ENCODE measurements at regions of chr17 and their contacts with region 1.

Region 1: GRCh38 chr17:30336369-30337171 is 2.7 kb upstream of the TMIGD1 start:
- DNase-seq: peak; percentile 88
- H3K4me3 Mint-ChIP-seq: no peak overlapping the region
- H3K27ac Mint-ChIP-seq: no peak overlapping the region
- H3K4me1 Mint-ChIP-seq: peaks cover 33% of the 10 kb centered on the region
- H3K27me3 Mint-ChIP-seq: peaks cover 8% of the 10 kb centered on the region

Region 2: GRCh38 chr17:30116661-30117551 is 219.7 kb before region 1 on chr17 and contains the start of gene NSRP1:
- intact Hi-C with region 1: loop called (anchors 2 kb)
- DNase-seq: peak; percentile 98
- H3K4me3 Mint-ChIP-seq: peak within 1 kb of the TSS; percentile 96
- H3K27ac Mint-ChIP-seq: peak within 1 kb of the TSS; percentile 96
- H3K4me1 Mint-ChIP-seq: peaks cover 45% of the 10 kb centered on the region
- H3K27me3 Mint-ChIP-seq: no peaks in the 10 kb centered on the region
- total RNA-seq, gene NSRP1: 29.8 and 31.7 TPM in 2 replicates

Region 3: GRCh38 chr17:30291543-30292285 is 44.9 kb before region 1 on chr17 and contains the start of gene BLMH:
- intact Hi-C with region 1: loop called (anchors 1 kb)
- DNase-seq: peak; percentile 96
- H3K4me3 Mint-ChIP-seq: peak within 1 kb of the TSS; percentile 91
- H3K27ac Mint-ChIP-seq: peak within 1 kb of the TSS; percentile 91
- H3K4me1 Mint-ChIP-seq: peaks cover 15% of the 10 kb centered on the region
- H3K27me3 Mint-ChIP-seq: no peaks in the 10 kb centered on the region
- total RNA-seq, gene BLMH: 68.2 and 72.8 TPM in 2 replicates

Region 4: GRCh38 chr17:30378824-30379302 is 42.3 kb after region 1 on chr17 and contains the start of gene CPD:
- intact Hi-C with region 1: loop called (anchors 1 kb)
- DNase-seq: peak; percentile 100
- H3K4me3 Mint-ChIP-seq: peak within 1 kb of the TSS; percentile 84
- H3K27ac Mint-ChIP-seq: peak within 1 kb of the TSS; percentile 90
- H3K4me1 Mint-ChIP-seq: peaks cover 51% of the 10 kb centered on the region
- H3K27me3 Mint-ChIP-seq: no peaks in the 10 kb centered on the region
- total RNA-seq, gene CPD: 26.6 and 33.4 TPM in 2 replicates

Region 5: GRCh38 chr17:30413109-30413508 is 76.5 kb after region 1 on chr17:
- intact Hi-C with region 1: no loop called
- DNase-seq: no peak
- H3K4me3 Mint-ChIP-seq: peak overlapping the region; percentile 4
- H3K27ac Mint-ChIP-seq: peak overlapping the region; percentile 69
- H3K4me1 Mint-ChIP-seq: peaks cover 24% of the 10 kb centered on the region
- H3K27me3 Mint-ChIP-seq: no peaks in the 10 kb centered on the region